ENCODE measurements at regions of chr1 and their contacts with region 1.

Region 1: DNA sequence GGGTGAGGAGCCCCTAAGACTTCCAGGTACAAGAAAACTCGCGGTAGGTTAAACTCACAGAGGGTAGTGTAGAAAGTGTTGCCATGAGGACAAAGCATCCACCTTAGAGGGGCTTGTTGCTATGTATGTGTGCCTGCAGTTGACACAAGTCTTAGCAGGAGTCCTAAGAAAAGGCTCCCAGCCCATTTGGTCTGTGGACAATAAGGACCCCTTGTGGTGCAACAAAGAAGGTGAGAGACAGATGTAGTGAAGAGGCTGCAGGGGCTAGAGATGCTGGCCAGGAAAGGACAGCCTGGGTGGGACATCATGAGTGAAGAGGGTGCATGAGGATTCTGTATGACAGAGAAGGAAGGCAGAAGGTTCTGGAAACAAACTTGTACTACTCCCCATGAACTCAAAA is 36.3 kb upstream of the IL10 start:
- DNase-seq: peak; percentile 67
- H3K4me3 Mint-ChIP-seq: no peak overlapping the region
- H3K27ac Mint-ChIP-seq: no peak overlapping the region
- H3K4me1 Mint-ChIP-seq: peaks cover 5% of the 10 kb centered on the region
- H3K27me3 Mint-ChIP-seq: peaks cover 41% of the 10 kb centered on the region
- CTCF ChIP-seq: peak; percentile 30

Region 2: DNA sequence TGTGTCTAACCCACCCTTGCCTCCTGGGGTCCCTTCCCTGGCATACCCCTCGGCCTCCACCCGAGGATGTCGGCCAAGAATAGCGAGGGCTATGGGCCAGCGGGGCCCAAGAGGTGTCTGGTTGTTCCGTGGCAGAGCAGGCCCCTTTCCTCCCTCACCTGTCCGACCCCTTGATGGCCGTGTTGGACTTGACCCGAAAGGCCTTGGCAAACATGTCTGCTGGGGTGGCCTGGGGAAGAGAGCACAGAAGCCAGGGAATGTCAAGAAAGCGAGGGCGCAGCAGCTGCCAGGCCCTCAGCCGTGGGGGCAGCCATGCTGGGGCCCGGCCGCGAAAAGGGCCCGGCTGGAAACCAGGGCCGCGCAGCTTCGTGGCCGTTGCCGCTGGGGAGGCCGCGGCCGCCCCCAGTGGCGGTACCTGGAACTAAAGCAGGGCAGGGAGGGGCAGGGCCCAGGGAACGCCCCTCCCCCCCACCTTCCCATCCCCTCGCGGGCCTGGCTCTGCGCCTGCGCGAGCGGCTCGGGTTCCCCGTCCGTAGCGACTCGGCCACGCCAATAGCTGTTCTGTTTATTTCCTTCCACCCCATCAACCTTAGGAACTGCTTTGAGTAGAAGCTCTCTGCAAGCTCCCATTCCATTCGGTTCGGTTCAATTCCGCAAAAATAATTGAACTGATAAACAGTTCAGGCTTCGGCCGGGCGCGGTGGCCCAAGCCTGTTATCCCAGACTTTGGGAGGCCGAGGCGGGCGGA is 196.3 kb before region 1 on chr1 and contains the start of gene EIF2D:
- CTCF ChIA-PET with region 1: interaction called, 5 read pairs
- POLR2A ChIA-PET with region 1: no interaction called
- intact Hi-C with region 1: loop called (anchors 1 kb)
- DNase-seq: peak; percentile 99
- H3K4me3 Mint-ChIP-seq: peak within 1 kb of the TSS; percentile 88
- H3K27ac Mint-ChIP-seq: peak within 1 kb of the TSS; percentile 97
- H3K4me1 Mint-ChIP-seq: peaks cover 21% of the 10 kb centered on the region
- H3K27me3 Mint-ChIP-seq: no peaks in the 10 kb centered on the region
- CTCF ChIP-seq: peak; percentile 100
- total RNA-seq, gene EIF2D: 110 and 116 TPM in 2 replicates

Region 3: DNA sequence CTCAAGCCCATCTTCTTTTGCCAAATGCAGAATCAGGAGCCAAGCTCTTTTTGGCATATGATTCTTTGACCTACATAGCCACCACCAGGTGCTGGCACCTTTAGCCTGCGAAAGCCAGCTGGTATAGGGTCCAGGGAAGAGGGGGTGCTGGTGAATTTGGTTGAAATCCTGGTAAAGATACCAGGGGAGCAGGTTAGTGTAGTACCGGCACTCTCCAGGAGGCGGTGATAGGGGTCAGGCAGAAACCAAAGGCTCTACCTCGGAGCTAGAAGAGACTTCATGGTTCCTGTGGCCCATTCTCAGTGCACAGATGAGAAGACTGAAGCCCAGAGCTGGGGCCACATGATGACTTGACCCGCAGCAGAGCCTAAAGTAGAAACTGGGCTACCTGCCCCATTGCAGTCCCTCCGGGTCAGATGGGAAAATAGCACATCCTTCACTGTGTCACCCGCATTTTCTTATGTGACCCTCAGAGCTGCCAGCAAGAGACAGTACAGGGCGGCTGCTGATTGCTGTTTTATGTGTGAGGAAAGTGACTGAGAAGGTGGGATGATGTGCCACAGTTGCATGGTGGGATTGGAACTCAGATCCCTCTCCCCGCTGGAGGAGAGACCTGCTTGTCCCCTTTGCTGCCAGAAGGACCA is 74.0 kb before region 1 on chr1:
- CTCF ChIA-PET with region 1: interaction called, 24 read pairs
- POLR2A ChIA-PET with region 1: no interaction called
- intact Hi-C with region 1: loop called (anchors 2 kb)
- DNase-seq: peak; percentile 73
- H3K4me3 Mint-ChIP-seq: no peak overlapping the region
- H3K27ac Mint-ChIP-seq: peak overlapping the region; percentile 6
- H3K4me1 Mint-ChIP-seq: peaks cover 9% of the 10 kb centered on the region
- H3K27me3 Mint-ChIP-seq: no peaks in the 10 kb centered on the region
- CTCF ChIP-seq: peak; percentile 97

Region 4: GRCh38 chr1:206826405-206826804 is 17.8 kb after region 1 on chr1:
- CTCF ChIA-PET with region 1: interaction called, 57 read pairs
- POLR2A ChIA-PET with region 1: interaction called, 11 read pairs
- intact Hi-C with region 1: no loop called
- DNase-seq: peak; percentile 68
- H3K4me3 Mint-ChIP-seq: no peak overlapping the region
- H3K27ac Mint-ChIP-seq: peak overlapping the region; percentile 73
- H3K4me1 Mint-ChIP-seq: peaks cover 14% of the 10 kb centered on the region
- H3K27me3 Mint-ChIP-seq: no peaks in the 10 kb centered on the region
- CTCF ChIP-seq: no peak

Region 5: GRCh38 chr1:206865013-206865671 is 56.5 kb after region 1 on chr1 and contains the start of gene IL20:
- CTCF ChIA-PET with region 1: interaction called, 37 read pairs
- POLR2A ChIA-PET with region 1: interaction called, 3 read pairs
- intact Hi-C with region 1: loop called (anchors 1 kb)
- DNase-seq: peak; percentile 100
- H3K4me3 Mint-ChIP-seq: no peak within 1 kb of the TSS
- H3K27ac Mint-ChIP-seq: no peak within 1 kb of the TSS
- H3K4me1 Mint-ChIP-seq: peaks cover 32% of the 10 kb centered on the region
- H3K27me3 Mint-ChIP-seq: peaks cover 17% of the 10 kb centered on the region
- CTCF ChIP-seq: peak; percentile 100
- total RNA-seq, gene IL20: not detected in 2 replicates

Region 6: DNA sequence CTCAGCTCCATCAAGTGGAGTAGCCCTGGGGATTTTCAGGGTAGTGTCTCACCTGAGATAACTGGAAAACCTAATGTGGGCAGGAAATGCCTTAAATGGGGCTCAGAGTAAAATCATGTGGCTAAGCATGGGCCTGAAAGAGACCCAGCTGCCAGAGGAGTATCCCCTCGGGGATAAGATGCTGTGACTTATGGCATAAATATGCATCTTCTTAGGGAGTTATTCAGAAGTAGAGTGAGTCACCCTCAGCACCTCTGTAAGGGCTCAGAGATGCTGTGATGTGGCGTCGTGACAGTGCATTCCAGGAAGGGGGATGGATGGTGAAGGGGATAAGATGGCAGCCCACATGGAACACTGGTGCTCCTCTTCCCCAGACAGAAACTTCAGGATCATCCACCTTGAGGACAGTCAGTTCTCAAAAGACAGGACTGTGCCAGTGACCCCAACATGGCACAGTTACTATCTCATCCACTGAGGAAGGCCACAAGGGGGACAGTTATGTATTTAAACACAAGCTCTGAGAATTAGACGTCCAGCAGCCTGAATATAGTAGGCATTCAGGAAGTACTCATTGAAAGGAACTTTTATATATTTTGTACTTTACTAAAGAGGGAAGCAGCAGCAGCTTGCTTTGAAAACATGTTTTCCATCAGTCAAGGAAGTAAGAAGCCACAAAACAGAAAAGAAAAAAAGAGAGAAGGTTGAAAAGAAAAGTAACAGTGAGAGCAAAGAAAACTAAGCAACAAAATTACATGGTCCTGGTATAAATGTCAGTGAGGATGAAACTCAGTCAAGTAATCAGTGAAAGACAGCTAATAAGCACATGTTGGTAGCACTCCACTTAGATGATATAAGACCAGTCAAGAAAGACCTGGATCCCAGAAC is 96.9 kb after region 1 on chr1:
- CTCF ChIA-PET with region 1: interaction called, 49 read pairs
- POLR2A ChIA-PET with region 1: interaction called, 25 read pairs
- intact Hi-C with region 1: no loop called
- DNase-seq: peak; percentile 97
- H3K4me3 Mint-ChIP-seq: no peak overlapping the region
- H3K27ac Mint-ChIP-seq: peak overlapping the region; percentile 22
- H3K4me1 Mint-ChIP-seq: peaks cover 51% of the 10 kb centered on the region
- H3K27me3 Mint-ChIP-seq: no peaks in the 10 kb centered on the region
- CTCF ChIP-seq: no peak

Region 7: DNA sequence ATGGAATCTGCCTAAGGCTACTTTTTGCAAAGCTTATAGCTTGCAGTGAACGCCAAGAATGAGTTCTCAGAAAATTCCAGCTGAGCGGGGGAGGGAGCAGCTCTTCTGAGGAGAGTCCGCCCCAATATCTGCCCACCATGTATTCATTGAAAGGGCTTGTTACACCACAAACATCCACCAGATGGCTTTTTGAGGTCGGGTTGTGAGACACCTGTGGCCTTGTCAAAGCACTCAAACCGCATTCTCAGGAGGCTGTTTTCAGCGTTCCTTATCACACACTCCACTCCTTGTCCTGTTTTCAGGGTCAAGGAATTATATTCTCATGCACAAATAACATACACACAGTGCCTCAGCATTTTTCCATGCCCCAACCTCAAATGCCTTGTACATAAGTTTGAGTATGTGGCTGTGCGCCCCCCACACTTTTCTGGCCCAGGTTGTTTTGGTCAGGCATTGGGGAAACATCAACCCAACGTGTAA is 276.1 kb after region 1 on chr1:
- CTCF ChIA-PET with region 1: no interaction called
- POLR2A ChIA-PET with region 1: no interaction called
- intact Hi-C with region 1: no loop called
- DNase-seq: peak; percentile 90
- H3K4me3 Mint-ChIP-seq: no peak overlapping the region
- H3K27ac Mint-ChIP-seq: no peak overlapping the region
- H3K4me1 Mint-ChIP-seq: peaks cover 6% of the 10 kb centered on the region
- H3K27me3 Mint-ChIP-seq: peaks cover 21% of the 10 kb centered on the region
- CTCF ChIP-seq: peak; percentile 92

Region 8: GRCh38 chr1:207362962-207363858 is 554.6 kb after region 1 on chr1:
- CTCF ChIA-PET with region 1: no interaction called
- POLR2A ChIA-PET with region 1: no interaction called
- intact Hi-C with region 1: no loop called
- DNase-seq: no peak
- H3K4me3 Mint-ChIP-seq: no peak overlapping the region
- H3K27ac Mint-ChIP-seq: no peak overlapping the region
- H3K4me1 Mint-ChIP-seq: no peaks in the 10 kb centered on the region
- H3K27me3 Mint-ChIP-seq: no peaks in the 10 kb centered on the region
- CTCF ChIP-seq: no peak

Measured in MCF 10A (cell line).